B cell (primary cell): ENCODE measurements at regions of chr6 and their contacts with region 1.

Region 1: DNA sequence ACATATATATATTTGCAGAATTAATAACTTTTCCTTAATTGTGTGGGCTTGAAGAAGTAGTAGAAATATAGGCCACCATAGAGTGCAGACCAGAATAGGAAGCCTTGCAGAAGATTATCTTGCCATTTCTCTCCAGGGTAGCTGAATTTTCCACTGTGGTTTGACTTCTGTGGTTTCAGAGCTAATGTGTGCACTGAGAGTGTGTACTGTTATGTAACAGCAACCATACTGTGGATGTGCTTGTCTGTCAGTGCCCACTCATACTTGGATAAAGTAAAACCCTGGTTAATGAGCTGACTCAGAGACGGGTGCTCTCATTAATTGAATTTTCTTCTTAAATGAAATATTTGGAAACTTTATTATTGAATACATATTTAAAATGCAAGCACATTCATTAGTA is 57.2 kb downstream of the CEP43 start:
- DNase-seq: peak; percentile 16
- ATAC-seq: peak; percentile 76
- H3K4me3 ChIP-seq: no peak overlapping the region
- H3K4me3 Mint-ChIP-seq: no peak overlapping the region
- H3K27ac ChIP-seq: no peak overlapping the region
- H3K27ac Mint-ChIP-seq: peak overlapping the region; percentile 32
- H3K4me1 ChIP-seq: peaks cover 9 to 13% of the 10 kb centered on the region in 2 donors
- H3K4me1 Mint-ChIP-seq: peaks cover 21% of the 10 kb centered on the region
- H3K27me3 ChIP-seq: no peaks in the 10 kb centered on the region
- H3K27me3 Mint-ChIP-seq: no peaks in the 10 kb centered on the region
- CTCF ChIP-seq: no peak

Region 2: DNA sequence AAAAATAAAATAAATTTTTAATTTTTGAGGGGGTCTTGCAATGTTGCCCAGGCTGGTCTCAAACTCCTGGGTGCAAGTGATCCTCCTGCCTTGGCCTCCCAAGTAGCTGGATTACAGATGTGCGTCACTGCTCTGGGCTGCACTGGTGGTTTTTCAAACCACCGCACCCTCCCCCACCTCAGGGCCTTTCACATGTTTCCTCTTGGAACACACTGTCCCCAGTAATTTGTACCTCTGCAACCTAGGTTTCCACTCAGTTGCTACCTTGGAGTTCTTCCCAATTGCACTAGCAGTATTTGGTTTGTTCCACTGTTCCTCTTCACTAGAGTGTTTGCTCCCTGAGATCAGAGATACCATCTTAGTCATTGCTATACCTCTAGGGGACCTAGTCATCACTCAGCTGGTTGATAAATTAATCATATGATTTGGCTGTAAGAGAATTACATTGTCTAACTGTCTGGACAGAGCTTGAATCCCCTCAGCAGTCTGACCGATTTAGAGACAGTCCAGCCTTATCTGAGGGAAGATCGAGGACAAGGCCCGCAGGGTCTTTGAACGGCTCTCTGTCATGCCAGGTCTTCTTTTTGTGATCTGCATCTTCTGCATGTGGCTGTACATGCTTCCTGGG is 25.2 kb before region 1 on chr6:
- CTCF ChIA-PET with region 1: no interaction called
- POLR2A ChIA-PET with region 1: no interaction called
- intact Hi-C with region 1: no loop called
- DNase-seq: no peak
- ATAC-seq: no peak
- H3K4me3 ChIP-seq: no peak overlapping the region
- H3K4me3 Mint-ChIP-seq: no peak overlapping the region
- H3K27ac ChIP-seq: no peak overlapping the region
- H3K27ac Mint-ChIP-seq: peak overlapping the region; percentile 57
- H3K4me1 ChIP-seq: no peaks in the 10 kb centered on the region
- H3K4me1 Mint-ChIP-seq: peaks cover 4% of the 10 kb centered on the region
- H3K27me3 ChIP-seq: no peaks in the 10 kb centered on the region
- H3K27me3 Mint-ChIP-seq: no peaks in the 10 kb centered on the region
- CTCF ChIP-seq: no peak

Region 3: DNA sequence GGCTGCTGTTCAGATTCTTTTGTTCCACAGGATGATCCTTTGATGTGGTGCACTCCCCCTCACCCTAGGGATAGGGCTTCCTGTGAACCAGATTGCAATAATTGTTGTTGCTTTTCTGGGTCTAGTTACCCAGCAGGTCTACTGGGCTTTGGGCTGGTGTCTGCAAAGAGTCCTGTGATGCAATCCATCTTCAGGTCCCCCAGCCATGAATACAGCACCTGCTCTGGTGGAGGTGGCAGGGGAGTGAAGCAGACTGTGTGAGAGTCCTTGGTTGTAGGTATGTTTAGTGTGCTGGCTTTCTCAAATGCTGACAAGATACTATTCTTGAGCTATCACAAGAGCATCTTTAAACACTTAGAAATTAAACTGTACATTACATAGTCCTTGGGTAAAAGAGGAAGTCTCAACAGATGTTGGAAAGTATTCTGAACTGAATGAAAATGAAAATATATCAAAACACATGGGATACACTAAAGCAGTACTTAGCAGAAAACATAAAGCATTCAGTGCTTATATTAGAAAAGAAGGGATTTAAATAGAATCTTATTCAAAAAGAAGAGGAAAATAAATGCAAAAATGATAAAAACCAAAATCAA is 17.4 kb after region 1 on chr6:
- CTCF ChIA-PET with region 1: interaction called, 5 read pairs
- POLR2A ChIA-PET with region 1: interaction called, 5 read pairs
- intact Hi-C with region 1: loop called (anchors 2 kb)
- DNase-seq: peak; percentile 46
- ATAC-seq: peak; percentile 58
- H3K4me3 ChIP-seq: peak overlapping the region in 1 of 5 experiments; percentile 11
- H3K4me3 Mint-ChIP-seq: no peak overlapping the region
- H3K27ac ChIP-seq: peak overlapping the region in 1 of 2 donors; percentile 44
- H3K27ac Mint-ChIP-seq: peak overlapping the region; percentile 21
- H3K4me1 ChIP-seq: peaks cover 32 to 33% of the 10 kb centered on the region in 2 donors
- H3K4me1 Mint-ChIP-seq: peaks cover 27% of the 10 kb centered on the region
- H3K27me3 ChIP-seq: no peaks in the 10 kb centered on the region
- H3K27me3 Mint-ChIP-seq: no peaks in the 10 kb centered on the region
- CTCF ChIP-seq: no peak

Region 4: GRCh38 chr6:167163476-167164011 is 107.2 kb after region 1 on chr6:
- CTCF ChIA-PET with region 1: no interaction called
- POLR2A ChIA-PET with region 1: no interaction called
- intact Hi-C with region 1: no loop called
- DNase-seq: no peak
- ATAC-seq: no peak
- H3K4me3 ChIP-seq: no peak overlapping the region
- H3K4me3 Mint-ChIP-seq: no peak overlapping the region
- H3K27ac ChIP-seq: no peak overlapping the region
- H3K27ac Mint-ChIP-seq: no peak overlapping the region
- H3K4me1 ChIP-seq: no peaks in the 10 kb centered on the region
- H3K4me1 Mint-ChIP-seq: peaks cover 5% of the 10 kb centered on the region
- H3K27me3 ChIP-seq: no peaks in the 10 kb centered on the region
- H3K27me3 Mint-ChIP-seq: no peaks in the 10 kb centered on the region
- CTCF ChIP-seq: no peak

Region 5: DNA sequence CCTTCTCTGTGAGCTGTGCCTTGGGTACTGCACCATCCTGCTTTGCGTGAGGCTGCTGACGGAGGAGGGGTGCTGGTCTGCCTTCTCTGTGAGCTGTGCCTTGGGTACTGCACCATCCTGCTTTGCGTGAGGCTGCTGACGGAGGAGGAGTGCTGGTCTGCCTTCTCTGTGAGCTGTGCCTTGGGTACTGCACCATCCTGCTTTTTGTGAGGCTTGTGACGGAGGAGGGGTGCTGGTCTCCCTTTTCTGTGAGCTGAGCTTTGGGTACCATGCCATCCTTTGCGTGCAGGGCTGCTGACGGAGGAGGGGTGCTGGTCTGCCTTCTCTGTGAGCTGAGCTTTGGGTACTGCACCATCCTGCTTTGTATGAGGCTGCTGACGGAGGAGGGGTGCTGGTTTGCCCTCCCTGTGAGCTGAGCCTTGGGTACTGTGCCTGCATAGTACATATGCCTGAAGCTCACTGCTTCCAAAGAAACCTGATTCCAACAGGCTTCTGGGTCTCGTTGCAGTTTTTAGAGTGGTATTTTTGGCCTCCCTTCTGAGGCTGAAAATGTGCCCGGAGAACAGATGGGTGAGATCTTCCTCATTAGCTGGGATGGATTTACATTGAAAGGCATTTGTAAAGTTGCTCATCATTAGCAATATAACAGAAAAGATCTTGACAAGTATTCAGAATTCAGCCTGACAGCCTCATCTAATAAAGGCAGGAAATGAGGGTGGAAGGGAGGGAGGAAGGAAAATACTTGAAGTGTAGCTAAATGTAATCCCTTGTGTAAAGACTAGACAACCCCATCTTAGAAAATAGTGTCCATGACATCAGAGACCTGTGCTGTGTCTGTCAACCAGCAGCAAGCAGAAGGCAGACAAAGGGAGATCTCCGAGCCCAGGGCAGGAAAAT is 187.9 kb after region 1 on chr6:
- CTCF ChIA-PET with region 1: no interaction called
- POLR2A ChIA-PET with region 1: no interaction called
- intact Hi-C with region 1: no loop called
- DNase-seq: no peak
- ATAC-seq: no peak
- H3K4me3 ChIP-seq: no peak overlapping the region
- H3K4me3 Mint-ChIP-seq: no peak overlapping the region
- H3K27ac ChIP-seq: no peak overlapping the region
- H3K27ac Mint-ChIP-seq: no peak overlapping the region
- H3K4me1 ChIP-seq: no peaks in the 10 kb centered on the region
- H3K4me1 Mint-ChIP-seq: peaks cover 9% of the 10 kb centered on the region
- H3K27me3 ChIP-seq: peaks cover 0 to 3% (median 0%) of the 10 kb centered on the region in 4 experiments
- H3K27me3 Mint-ChIP-seq: peaks cover 4% of the 10 kb centered on the region
- CTCF ChIP-seq: no peak